CD4-positive, alpha-beta memory T cell (primary cell): ENCODE measurements at regions of chr6 and their contacts with region 1.

Region 1: GRCh38 chr6:24666641-24667377 is at the starts of genes ACOT13 and TDP2:
- DNase-seq: peak; percentile 97 to 98 (median 98)
- H3K4me3 ChIP-seq: peak within 1 kb of the TSS; percentile 79 to 97
- H3K4me3 Mint-ChIP-seq: peak within 1 kb of the TSS; percentile 96 to 100 (median 99)
- H3K27ac ChIP-seq: peak within 1 kb of the TSS; percentile 86
- H3K27ac Mint-ChIP-seq: peak within 1 kb of the TSS; percentile 95 to 100 (median 98)
- H3K4me1 ChIP-seq: peaks cover 43% of the 10 kb centered on the region
- H3K4me1 Mint-ChIP-seq: peaks cover 34 to 73% (median 51%) of the 10 kb centered on the region in 4 donors
- H3K27me3 ChIP-seq: no peaks in the 10 kb centered on the region
- H3K27me3 Mint-ChIP-seq: no peaks in the 10 kb centered on the region
- total RNA-seq, gene ACOT13: 11.1 to 12.5 TPM
- total RNA-seq, gene TDP2: 72.8 to 74.3 TPM

Region 2: GRCh38 chr6:24494821-24495795 is 171.7 kb before region 1 on chr6 and contains the start of gene ALDH5A1:
- CTCF ChIA-PET with region 1: no interaction called
- POLR2A ChIA-PET with region 1: interaction called, 12 read pairs
- intact Hi-C with region 1: loop called (anchors 10 kb)
- DNase-seq: peak; percentile 77 to 80 (median 78)
- H3K4me3 ChIP-seq: peak within 1 kb of the TSS; percentile 64 to 75
- H3K4me3 Mint-ChIP-seq: peak within 1 kb of the TSS; percentile 85 to 90 (median 88)
- H3K27ac ChIP-seq: peak within 1 kb of the TSS; percentile 18
- H3K27ac Mint-ChIP-seq: peak within 1 kb of the TSS; percentile 37 to 88 (median 66)
- H3K4me1 ChIP-seq: peaks cover 18% of the 10 kb centered on the region
- H3K4me1 Mint-ChIP-seq: peaks cover 19 to 27% (median 25%) of the 10 kb centered on the region in 4 donors
- H3K27me3 ChIP-seq: no peaks in the 10 kb centered on the region
- H3K27me3 Mint-ChIP-seq: no peaks in the 10 kb centered on the region
- total RNA-seq, gene ALDH5A1: 13.0 to 13.9 TPM

Region 3: GRCh38 chr6:24630856-24631505 is 35.8 kb before region 1 on chr6:
- CTCF ChIA-PET with region 1: no interaction called
- POLR2A ChIA-PET with region 1: no interaction called
- intact Hi-C with region 1: no loop called
- DNase-seq: no peak
- H3K4me3 ChIP-seq: no peak overlapping the region
- H3K4me3 Mint-ChIP-seq: no peak overlapping the region
- H3K27ac ChIP-seq: no peak overlapping the region
- H3K27ac Mint-ChIP-seq: no peak overlapping the region
- H3K4me1 ChIP-seq: no peaks in the 10 kb centered on the region
- H3K4me1 Mint-ChIP-seq: peaks cover 0 to 2% (median 0%) of the 10 kb centered on the region in 4 donors
- H3K27me3 ChIP-seq: peaks cover 5% of the 10 kb centered on the region
- H3K27me3 Mint-ChIP-seq: peaks cover 7 to 11% of the 10 kb centered on the region in 2 donors

Region 4: DNA sequence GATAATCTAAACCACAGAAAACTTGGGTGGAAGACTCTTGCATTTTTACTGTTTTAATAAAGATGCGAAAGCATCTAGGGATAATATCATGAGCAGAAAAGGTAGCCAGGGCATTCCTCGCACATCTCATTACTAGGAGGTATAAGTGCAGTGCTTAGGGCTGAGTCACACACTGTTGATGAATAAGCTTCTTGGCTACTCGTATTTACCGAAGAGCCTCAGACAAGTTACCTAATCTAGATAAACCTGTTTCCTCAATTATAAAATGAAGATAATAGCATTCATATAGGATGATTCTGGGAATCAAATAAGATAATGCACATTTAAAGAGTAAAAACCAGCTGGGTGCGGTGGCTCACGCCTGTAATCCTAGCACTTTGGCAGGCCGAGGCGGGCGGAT is 20.0 kb before region 1 on chr6:
- CTCF ChIA-PET with region 1: no interaction called
- POLR2A ChIA-PET with region 1: interaction called, 31 read pairs
- intact Hi-C with region 1: loop called (anchors 1 kb)
- DNase-seq: no peak
- H3K4me3 ChIP-seq: no peak overlapping the region
- H3K4me3 Mint-ChIP-seq: peak overlapping the region; percentile 84 to 95 (median 92)
- H3K27ac ChIP-seq: peak overlapping the region; percentile 41
- H3K27ac Mint-ChIP-seq: peak overlapping the region in 6 of 7 donors; percentile 74 to 97 (median 90)
- H3K4me1 ChIP-seq: peaks cover 11% of the 10 kb centered on the region
- H3K4me1 Mint-ChIP-seq: peaks cover 10 to 19% (median 12%) of the 10 kb centered on the region in 4 donors
- H3K27me3 ChIP-seq: peaks cover 11% of the 10 kb centered on the region
- H3K27me3 Mint-ChIP-seq: peaks cover 1 to 3% of the 10 kb centered on the region in 2 donors

Region 5: GRCh38 chr6:24699521-24700359 is 32.9 kb after region 1 on chr6:
- CTCF ChIA-PET with region 1: interaction called, 6 read pairs
- POLR2A ChIA-PET with region 1: interaction called, 5 read pairs
- intact Hi-C with region 1: loop called (anchors 5 kb)
- DNase-seq: no peak
- H3K4me3 ChIP-seq: no peak overlapping the region
- H3K4me3 Mint-ChIP-seq: no peak overlapping the region
- H3K27ac ChIP-seq: no peak overlapping the region
- H3K27ac Mint-ChIP-seq: peak overlapping the region in 5 of 7 donors; percentile 19 to 82 (median 43)
- H3K4me1 ChIP-seq: no peaks in the 10 kb centered on the region
- H3K4me1 Mint-ChIP-seq: peaks cover 5 to 23% (median 13%) of the 10 kb centered on the region in 4 donors
- H3K27me3 ChIP-seq: no peaks in the 10 kb centered on the region
- H3K27me3 Mint-ChIP-seq: no peaks in the 10 kb centered on the region

Region 6: GRCh38 chr6:24720604-24721460 is 54.0 kb after region 1 on chr6:
- CTCF ChIA-PET with region 1: no interaction called
- POLR2A ChIA-PET with region 1: interaction called, 45 read pairs
- intact Hi-C with region 1: loop called (anchors 1 kb)
- DNase-seq: peak; percentile 100
- H3K4me3 ChIP-seq: peak overlapping the region; percentile 68 to 95
- H3K4me3 Mint-ChIP-seq: peak overlapping the region; percentile 91 to 100 (median 97)
- H3K27ac ChIP-seq: peak overlapping the region; percentile 100
- H3K27ac Mint-ChIP-seq: peak overlapping the region; percentile 90 to 100 (median 99)
- H3K4me1 ChIP-seq: peaks cover 38% of the 10 kb centered on the region
- H3K4me1 Mint-ChIP-seq: peaks cover 33 to 56% (median 40%) of the 10 kb centered on the region in 4 donors
- H3K27me3 ChIP-seq: no peaks in the 10 kb centered on the region
- H3K27me3 Mint-ChIP-seq: no peaks in the 10 kb centered on the region

Region 7: DNA sequence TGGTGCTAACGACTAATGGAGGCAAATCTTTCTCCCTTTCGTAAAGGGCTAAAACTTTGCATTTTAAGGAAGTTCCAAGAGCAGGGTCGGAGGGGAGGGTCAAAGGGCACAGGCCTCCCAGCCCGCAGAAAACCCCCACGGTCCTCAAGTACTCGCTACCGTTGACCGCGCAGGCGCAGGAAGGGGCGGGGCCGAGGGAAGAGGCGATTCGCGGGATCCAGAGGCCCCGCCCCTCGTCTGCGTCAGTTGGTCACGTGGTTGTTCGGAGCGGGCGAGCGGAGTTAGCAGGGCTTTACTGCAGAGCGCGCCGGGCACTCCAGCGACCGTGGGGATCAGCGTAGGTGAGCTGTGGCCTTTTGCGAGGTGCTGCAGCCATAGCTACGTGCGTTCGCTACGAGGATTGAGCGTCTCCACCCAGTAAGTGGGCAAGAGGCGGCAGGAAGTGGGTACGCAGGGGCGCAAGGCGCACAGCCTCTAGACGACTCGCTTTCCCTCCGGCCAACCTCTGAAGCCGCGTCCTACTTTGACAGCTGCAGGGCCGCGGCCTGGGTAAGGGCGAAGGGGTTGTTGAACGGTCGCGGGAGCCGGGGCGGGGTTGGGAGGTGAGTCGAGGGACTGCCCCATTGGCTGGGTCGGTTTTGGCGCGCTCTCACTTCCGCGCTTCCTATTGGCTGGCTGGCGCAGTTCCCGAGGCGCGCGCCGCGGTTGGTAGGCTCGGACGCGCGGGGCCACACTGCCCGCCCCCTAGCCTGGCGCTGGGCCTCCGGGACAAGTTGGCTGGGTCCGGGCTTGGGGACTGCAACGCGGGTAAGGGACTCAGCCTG is 108.1 kb after region 1 on chr6 and contains the start of gene GMNN:
- CTCF ChIA-PET with region 1: no interaction called
- POLR2A ChIA-PET with region 1: interaction called, 11 read pairs
- intact Hi-C with region 1: loop called (anchors 2 kb)
- DNase-seq: peak; percentile 93 to 97 (median 95)
- H3K4me3 ChIP-seq: peak within 1 kb of the TSS; percentile 95 to 98
- H3K4me3 Mint-ChIP-seq: peak within 1 kb of the TSS; percentile 98 to 99 (median 99)
- H3K27ac ChIP-seq: peak within 1 kb of the TSS; percentile 85
- H3K27ac Mint-ChIP-seq: peak within 1 kb of the TSS; percentile 97 to 98 (median 98)
- H3K4me1 ChIP-seq: peaks cover 30% of the 10 kb centered on the region
- H3K4me1 Mint-ChIP-seq: peaks cover 16 to 31% (median 18%) of the 10 kb centered on the region in 4 donors
- H3K27me3 ChIP-seq: no peaks in the 10 kb centered on the region
- H3K27me3 Mint-ChIP-seq: no peaks in the 10 kb centered on the region
- total RNA-seq, gene GMNN: 6.1 to 6.7 TPM

Region 8: GRCh38 chr6:25423391-25423790 is 756.6 kb after region 1 on chr6:
- CTCF ChIA-PET with region 1: no interaction called
- POLR2A ChIA-PET with region 1: no interaction called
- intact Hi-C with region 1: no loop called
- DNase-seq: no peak
- H3K4me3 ChIP-seq: no peak overlapping the region
- H3K4me3 Mint-ChIP-seq: no peak overlapping the region
- H3K27ac ChIP-seq: no peak overlapping the region
- H3K27ac Mint-ChIP-seq: no peak overlapping the region
- H3K4me1 ChIP-seq: no peaks in the 10 kb centered on the region
- H3K4me1 Mint-ChIP-seq: peaks cover 0 to 17% (median 4%) of the 10 kb centered on the region in 4 donors
- H3K27me3 ChIP-seq: no peaks in the 10 kb centered on the region
- H3K27me3 Mint-ChIP-seq: no peaks in the 10 kb centered on the region